HEK293T (cell line): ENCODE measurements at regions of chr20 and their contacts with region 1.

Region 1: DNA sequence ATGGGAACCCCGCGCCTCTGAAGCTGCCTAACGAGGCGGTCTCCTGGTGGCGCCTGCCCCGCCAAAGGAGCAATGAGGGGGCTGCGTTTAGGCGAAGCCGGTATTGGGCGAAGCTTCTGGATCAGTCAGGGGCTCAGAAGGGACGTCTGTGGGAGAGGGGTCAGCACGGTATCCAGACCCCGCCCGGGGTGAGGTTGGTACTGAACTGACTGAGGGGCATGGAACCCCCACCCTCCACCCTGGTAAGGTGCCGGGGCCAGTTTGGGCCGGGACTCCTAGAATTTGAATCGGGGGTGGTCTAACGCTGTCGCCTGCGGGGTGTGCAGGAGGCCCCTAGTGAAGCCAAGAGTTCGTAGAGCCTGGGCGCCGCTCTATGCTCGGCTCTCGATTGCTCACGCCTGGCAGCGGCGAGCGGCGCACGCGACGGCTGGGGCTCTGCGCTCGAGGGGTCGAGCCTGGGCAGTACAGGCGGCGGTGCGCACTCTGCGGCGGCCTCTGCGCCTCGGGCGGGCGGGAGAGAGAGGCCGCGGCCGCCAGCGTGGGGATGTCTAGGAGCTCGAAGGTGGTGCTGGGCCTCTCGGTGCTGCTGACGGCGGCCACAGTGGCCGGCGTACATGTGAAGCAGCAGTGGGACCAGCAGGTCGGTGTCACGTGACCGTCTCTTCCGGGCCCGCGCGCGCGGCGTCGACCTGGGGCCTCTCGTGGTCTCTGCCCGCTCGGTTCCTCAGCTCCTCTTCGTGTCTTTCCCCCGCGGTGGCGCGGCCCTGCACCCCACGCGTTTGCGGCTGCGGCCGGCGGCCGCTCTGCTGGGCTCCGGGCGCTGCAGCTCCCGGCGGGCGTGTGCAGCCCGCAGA is at the starts of genes KAT14 and PET117:
- DNase-seq: peak; percentile 91

Region 2: DNA sequence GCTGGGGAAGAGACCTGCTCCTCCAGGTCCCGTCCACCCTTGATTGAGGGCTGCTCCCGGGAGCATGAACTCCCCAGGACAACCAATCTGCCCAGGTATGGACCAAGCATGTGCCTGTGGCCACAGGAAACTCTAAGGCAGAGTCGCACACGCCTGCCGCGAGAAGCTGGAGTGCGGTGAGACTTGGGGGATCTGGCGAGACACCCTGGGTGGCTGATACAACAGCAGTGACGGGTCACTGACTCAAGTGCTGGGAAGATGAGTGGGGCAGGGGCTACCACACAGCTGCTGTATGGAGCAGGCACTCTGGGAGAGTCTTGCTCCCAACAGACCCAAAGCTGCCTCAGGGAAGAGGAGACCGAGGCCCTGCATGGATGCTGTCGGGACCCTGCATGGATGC is 646.6 kb before region 1 on chr20:
- CTCF ChIA-PET with region 1: no interaction called
- POLR2A ChIA-PET with region 1: no interaction called
- DNase-seq: no peak

Region 3: GRCh38 chr20:18287915-18288748 is 150.5 kb after region 1 on chr20 and contains the start of gene ZNF133:
- CTCF ChIA-PET with region 1: no interaction called
- POLR2A ChIA-PET with region 1: interaction called, 10 read pairs
- DNase-seq: peak; percentile 89